ENCODE measurements at regions of chr2 and their contacts with region 1.

Region 1: GRCh38 chr2:29014811-29015421 is 33.8 kb downstream of the TOGARAM2 start:
- DNase-seq: peak; percentile 77
- ATAC-seq: peak; percentile 30

Region 2: DNA sequence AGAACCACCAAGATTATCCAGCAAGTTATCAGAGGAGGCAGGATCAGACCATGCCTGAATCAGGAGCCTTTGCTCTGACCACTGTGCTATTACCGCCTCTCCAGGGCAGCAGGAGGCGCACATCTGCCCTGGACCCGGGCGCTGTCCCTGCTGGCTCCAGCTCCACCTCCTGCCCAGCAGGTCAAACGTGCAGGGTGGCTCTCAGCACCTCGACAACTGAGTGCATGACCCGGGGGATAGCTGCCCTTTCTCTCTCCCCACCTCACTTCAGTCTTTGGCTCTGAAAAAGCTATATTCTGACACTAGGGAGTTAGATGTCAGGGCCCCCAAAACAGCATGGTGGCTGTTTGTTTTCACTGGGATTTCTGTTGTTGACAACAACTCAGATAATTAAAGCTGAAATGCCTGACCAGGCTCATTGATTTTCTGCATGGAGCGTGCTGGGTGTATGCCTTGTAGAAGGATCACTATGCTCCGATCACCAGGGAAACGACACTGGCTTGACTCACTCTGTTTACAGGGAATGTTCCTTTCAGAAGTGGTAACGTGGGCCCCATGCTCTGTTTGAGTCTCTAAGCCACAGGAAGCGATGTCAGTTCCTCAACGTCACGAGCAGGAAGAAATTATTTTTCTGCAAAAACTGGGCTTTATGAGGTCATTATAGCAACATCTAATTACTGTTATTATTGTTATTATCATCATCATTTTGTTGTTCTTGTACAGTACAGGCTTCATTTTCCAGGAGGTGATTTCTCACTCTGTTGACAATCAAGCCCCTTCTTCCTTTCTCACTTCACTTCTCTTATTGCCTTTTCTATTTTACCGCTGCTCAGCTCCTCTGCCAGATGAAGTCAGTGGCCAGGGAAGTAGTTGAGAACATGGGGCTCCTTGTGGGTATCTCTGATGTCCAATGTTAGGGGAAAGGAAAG is 393.5 kb before region 1 on chr2:
- intact Hi-C with region 1: loop called (anchors 10 kb)
- DNase-seq: no peak
- ATAC-seq: peak; percentile 67

Region 3: GRCh38 chr2:28958689-28959088 is 56.2 kb before region 1 on chr2:
- intact Hi-C with region 1: loop called (anchors 1 kb)
- DNase-seq: no peak
- ATAC-seq: peak; percentile 93

Region 4: DNA sequence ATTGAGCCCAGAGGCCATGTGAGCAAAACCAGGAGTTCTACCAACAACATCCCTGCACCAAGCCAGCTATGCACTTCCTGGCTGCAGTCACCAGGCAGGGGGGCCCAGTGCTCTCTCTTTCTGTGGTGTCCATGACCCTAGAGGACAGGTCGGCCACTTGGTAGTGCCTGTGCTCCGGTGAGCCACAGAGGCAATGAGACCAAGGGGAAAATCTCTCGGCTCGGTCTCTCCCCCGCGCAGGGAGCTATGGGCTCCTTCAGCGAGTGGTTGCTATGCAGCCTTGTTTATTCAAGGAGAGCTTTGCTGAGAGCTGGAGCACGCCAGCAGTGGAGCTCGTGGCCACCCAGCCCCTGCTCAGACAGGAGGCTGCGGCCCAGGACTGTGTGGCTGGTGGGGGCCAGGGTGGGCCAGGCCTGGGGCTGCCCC is 33.9 kb before region 1 on chr2 and contains the start of gene TOGARAM2:
- intact Hi-C with region 1: loop called (anchors 1 kb)
- DNase-seq: no peak
- ATAC-seq: peak; percentile 64
- total RNA-seq, gene TOGARAM2: 38.0 TPM

Region 5: GRCh38 chr2:29115797-29116781 is 101.2 kb after region 1 on chr2:
- intact Hi-C with region 1: loop called (anchors 5 kb)
- DNase-seq: peak; percentile 89
- ATAC-seq: peak; percentile 34